ENCODE measurements at regions of chr1 and their contacts with region 1.

Region 1: GRCh38 chr1:16167331-16168143 is 11.7 kb upstream of the EPHA2 start:
- DNase-seq: peak; percentile 64 to 74 (median 70)
- H3K4me3 ChIP-seq: no peak overlapping the region
- H3K4me3 Mint-ChIP-seq: peak overlapping the region in 7 of 8 donors; percentile 17 to 84 (median 72)
- H3K27ac ChIP-seq: peak overlapping the region; percentile 9
- H3K27ac Mint-ChIP-seq: peak overlapping the region in 3 of 7 donors; percentile 23 to 48 (median 40)
- H3K4me1 ChIP-seq: peaks cover 35% of the 10 kb centered on the region
- H3K4me1 Mint-ChIP-seq: peaks cover 29 to 71% (median 47%) of the 10 kb centered on the region in 4 donors
- H3K27me3 ChIP-seq: no peaks in the 10 kb centered on the region
- H3K27me3 Mint-ChIP-seq: peaks cover 0 to 2% of the 10 kb centered on the region in 2 donors

Region 2: DNA sequence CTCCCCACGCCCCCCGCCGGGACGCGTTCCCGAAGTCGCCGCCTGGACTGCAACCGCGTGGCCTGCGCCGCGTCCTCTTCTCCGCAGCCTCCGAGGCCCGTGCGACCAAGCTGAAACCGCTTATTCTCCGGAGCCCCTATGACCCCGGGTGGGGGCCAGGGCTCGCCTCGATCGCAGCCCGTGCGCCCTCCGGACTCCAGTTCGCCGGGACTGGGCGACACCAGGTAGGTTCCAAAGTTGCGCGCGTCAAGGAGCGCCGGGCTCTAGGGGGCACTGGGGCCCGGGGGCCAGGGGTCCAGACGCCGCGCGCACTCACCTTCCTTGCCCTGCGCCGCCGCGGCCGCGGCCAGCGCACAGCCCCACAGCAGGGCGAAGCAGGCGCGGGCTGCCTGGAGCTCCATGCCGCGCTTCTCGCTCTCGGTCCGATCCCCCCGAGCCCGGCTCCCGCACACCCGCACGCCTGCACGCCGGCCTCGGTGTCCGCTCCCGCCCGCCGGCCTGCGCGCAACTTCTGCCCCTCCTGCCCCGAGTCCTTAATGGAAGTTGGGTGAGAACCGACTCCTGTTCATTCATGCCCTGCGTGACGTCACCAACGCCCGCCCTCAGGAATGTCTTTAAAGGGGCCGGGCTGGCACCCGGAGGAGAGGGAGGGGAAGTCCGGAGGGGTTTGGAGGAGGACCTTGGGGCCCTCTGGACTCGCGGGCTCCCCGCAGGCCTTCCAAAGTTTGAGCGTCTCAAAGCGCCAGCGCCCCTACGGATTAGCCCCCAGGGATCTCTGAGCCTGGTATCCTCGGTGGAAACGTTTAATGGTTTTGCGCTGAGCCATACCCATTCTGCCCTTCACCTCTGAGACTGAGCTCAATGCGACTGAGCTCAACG is 11.8 kb before region 1 on chr1 and contains the start of gene EPHA2:
- CTCF ChIA-PET with region 1: interaction called, 3 read pairs
- POLR2A ChIA-PET with region 1: interaction called, 3 read pairs
- intact Hi-C with region 1: loop called (anchors 2 kb)
- DNase-seq: no peak
- H3K4me3 ChIP-seq: peak within 1 kb of the TSS in 1 of 2 donors; percentile 49
- H3K4me3 Mint-ChIP-seq: peak within 1 kb of the TSS; percentile 75 to 83 (median 80)
- H3K27ac ChIP-seq: no peak within 1 kb of the TSS
- H3K27ac Mint-ChIP-seq: peak within 1 kb of the TSS; percentile 3 to 81 (median 56)
- H3K4me1 ChIP-seq: peaks cover 70% of the 10 kb centered on the region
- H3K4me1 Mint-ChIP-seq: peaks cover 24 to 61% (median 41%) of the 10 kb centered on the region in 4 donors
- H3K27me3 ChIP-seq: no peaks in the 10 kb centered on the region
- H3K27me3 Mint-ChIP-seq: peaks cover 1 to 2% of the 10 kb centered on the region in 2 donors
- total RNA-seq, gene EPHA2: not detected

Measured in CD4-positive, alpha-beta memory T cell (primary cell).